Heart right ventricle (tissue), 16 donors: ENCODE measurements at regions of chr11 and their contacts with region 1.

Region 1: GRCh38 chr11:43880640-43881159 is at the start of gene ALKBH3:
- DNase-seq: peak; percentile 90 to 91
- ATAC-seq: peak; percentile 98 to 100 (median 100)
- H3K4me3 ChIP-seq: peak within 1 kb of the TSS; percentile 74 to 97 (median 82)
- H3K27ac ChIP-seq: peak within 1 kb of the TSS in 9 of 10 donors; percentile 66 to 90 (median 71)
- H3K4me1 ChIP-seq: peaks cover 6 to 21% (median 16%) of the 10 kb centered on the region in 9 donors
- H3K27me3 ChIP-seq: peaks cover 0 to 35% (median 17%) of the 10 kb centered on the region in 7 donors
- CTCF ChIP-seq: peak in 1 of 9 donors; percentile 20
- total RNA-seq, gene ALKBH3: 9.2 to 20.5 (median 17.8) TPM

Region 2: GRCh38 chr11:43708776-43709175 is 171.9 kb before region 1 on chr11:
- intact Hi-C with region 1: no loop called
- DNase-seq: no peak
- ATAC-seq: no peak
- H3K4me3 ChIP-seq: no peak overlapping the region
- H3K27ac ChIP-seq: no peak overlapping the region
- H3K4me1 ChIP-seq: peaks cover 0 to 3% (median 0%) of the 10 kb centered on the region in 9 donors
- H3K27me3 ChIP-seq: no peaks in the 10 kb centered on the region
- CTCF ChIP-seq: peak in 8 of 9 donors; percentile 15 to 64 (median 50)

Region 3: GRCh38 chr11:44036811-44037657 is 156.3 kb after region 1 on chr11:
- intact Hi-C with region 1: loop called in 1 of 10 experiments (anchors 5 kb)
- DNase-seq: peak; percentile 80 to 86
- ATAC-seq: peak; percentile 88 to 95 (median 92)
- H3K4me3 ChIP-seq: no peak overlapping the region
- H3K27ac ChIP-seq: peak overlapping the region in 3 of 10 donors; percentile 9 to 31 (median 25)
- H3K4me1 ChIP-seq: peaks cover 0 to 31% (median 24%) of the 10 kb centered on the region in 9 donors
- H3K27me3 ChIP-seq: no peaks in the 10 kb centered on the region
- CTCF ChIP-seq: peak; percentile 79 to 94 (median 88)